Activated T-helper 2 cell treated with anti-CD3 and anti-CD28 coated beads, Interferon-gamma antibody, Interleukin-2, Interleukin-4, amounts not matched to agents 10 μg/mL and 5 μg/mL and 100 μg/mL, durations not matched to agents 14 hours and 24 hours and 36 hours (primary cell): ENCODE measurements at regions of chr1 and their contacts with region 1.

Region 1: DNA sequence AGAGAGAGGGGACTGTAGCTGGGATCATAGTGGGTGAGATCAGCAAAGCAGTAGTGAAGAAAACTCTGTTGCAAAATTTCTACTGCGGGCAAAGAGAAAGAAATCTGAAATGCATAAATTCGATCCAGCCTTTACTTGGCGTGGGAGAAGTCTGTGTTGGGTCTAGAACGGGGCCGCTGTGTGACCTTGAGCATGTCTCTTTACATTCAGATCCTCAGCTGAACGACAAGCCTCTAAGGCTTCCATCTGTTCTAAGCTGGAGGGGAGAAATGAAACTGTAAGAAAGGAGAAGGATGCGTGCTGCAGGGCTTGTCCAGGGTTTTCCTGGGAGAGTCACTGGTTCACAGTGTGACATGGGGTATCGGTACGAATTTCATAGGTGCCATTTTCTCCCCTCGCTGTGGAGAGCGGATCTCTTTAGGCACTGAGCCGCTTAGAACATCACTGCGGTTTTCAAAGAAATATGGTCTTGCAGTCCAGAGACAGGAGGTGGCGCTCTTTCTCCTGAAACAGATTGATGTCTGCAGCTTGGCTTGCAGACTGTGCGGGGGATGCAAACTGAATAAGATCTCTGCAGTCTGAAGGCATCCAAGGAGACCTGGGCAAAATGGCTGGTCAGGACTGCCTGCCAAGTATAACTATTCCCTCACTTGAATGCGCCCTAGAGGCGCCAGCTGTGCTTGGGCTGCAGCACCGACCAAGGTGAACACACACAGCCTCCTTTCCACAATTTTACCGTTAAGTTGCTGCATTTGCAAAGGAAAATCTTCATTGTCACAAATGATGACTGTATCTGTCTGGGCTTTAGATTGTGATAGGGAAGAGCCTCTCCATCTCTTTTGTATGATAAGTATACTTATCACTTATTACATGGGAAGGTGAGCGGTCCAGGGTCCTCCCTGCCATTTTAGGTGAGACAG is 104.1 kb downstream of the XCL2 start:
- DNase-seq: peak; percentile 79
- H3K4me3 Mint-ChIP-seq: peak overlapping the region; percentile 58
- H3K27ac Mint-ChIP-seq: peak overlapping the region; percentile 65
- H3K4me1 Mint-ChIP-seq: peaks cover 57% of the 10 kb centered on the region
- H3K27me3 Mint-ChIP-seq: no peaks in the 10 kb centered on the region

Region 2: DNA sequence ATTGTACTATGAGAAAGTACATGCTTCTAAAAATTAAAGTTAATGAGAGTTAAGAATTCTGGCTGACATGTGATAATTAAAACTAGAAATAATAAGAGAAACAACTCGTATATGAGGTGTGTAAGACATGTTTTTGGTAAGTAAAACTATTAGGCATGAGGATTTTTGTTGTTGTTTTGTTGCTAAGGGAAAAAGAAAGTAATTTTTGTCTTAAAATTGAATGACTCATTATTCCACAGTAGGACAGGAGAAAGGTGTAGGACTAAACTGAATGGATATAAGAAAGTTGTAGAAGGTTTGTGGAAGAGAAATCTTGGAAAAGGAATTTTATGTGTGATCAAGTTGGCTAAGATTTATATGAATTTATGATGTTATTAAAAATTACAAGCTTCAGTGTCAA is 104.2 kb before region 1 on chr1:
- intact Hi-C with region 1: no loop called
- DNase-seq: no peak
- H3K4me3 Mint-ChIP-seq: no peak overlapping the region
- H3K27ac Mint-ChIP-seq: no peak overlapping the region
- H3K4me1 Mint-ChIP-seq: peaks cover 32% of the 10 kb centered on the region
- H3K27me3 Mint-ChIP-seq: peaks cover 1% of the 10 kb centered on the region

Region 3: DNA sequence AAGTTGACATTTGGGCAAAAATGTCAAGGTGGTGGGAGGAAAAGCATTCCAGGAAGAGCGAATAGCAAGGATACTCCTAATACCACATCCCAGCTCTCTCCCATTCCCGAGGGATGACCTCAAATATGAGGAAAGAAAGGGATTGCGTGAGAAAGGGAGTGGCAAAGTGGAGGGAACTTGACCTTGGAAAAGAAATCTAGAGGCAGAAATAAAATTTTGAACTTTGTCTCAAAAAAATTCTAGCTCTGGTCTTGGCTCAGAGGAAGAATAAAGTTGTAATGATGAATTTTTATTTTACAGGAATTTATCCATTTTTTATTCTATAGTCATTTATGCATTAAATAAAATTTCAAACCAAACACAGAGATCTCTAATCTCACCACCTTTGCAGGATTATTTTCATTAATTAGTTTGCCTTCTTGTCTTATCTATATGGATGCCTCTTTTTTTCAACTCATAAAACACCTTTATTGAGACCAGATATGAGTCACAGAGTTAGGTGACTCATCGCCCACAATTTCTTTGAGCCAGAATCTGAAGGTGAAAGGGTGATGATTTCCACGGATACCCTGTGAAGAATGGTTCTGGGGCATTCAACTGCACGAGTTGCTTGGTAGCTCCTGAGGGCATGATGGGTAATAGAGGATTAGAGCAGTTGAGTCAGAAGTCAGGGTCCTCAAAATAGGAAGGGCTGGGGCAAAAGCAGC is 31.0 kb before region 1 on chr1:
- intact Hi-C with region 1: loop called (anchors 2 kb)
- DNase-seq: peak; percentile 64
- H3K4me3 Mint-ChIP-seq: peak overlapping the region; percentile 40
- H3K27ac Mint-ChIP-seq: peak overlapping the region; percentile 90
- H3K4me1 Mint-ChIP-seq: peaks cover 48% of the 10 kb centered on the region
- H3K27me3 Mint-ChIP-seq: no peaks in the 10 kb centered on the region

Region 4: DNA sequence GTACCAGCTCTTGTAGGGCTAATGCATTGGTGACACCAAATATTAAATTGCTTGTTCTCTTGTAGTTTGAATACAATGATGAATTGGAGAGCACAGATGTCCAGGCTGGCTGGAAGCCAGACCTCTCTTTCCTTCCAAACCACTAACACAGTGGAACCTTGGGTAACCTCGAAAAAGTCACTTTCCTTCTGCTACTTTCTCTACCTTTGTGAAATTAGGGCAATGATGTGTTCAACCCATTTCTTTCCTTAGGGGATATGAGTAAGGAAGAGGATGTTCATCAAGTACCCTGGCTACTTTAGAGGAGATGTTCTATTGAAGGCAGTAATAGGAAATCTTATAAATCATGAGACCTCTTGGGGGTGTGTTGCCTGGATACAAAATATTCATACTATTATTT is 48.4 kb after region 1 on chr1:
- intact Hi-C with region 1: loop called (anchors 5 kb)
- DNase-seq: no peak
- H3K4me3 Mint-ChIP-seq: no peak overlapping the region
- H3K27ac Mint-ChIP-seq: no peak overlapping the region
- H3K4me1 Mint-ChIP-seq: peaks cover 26% of the 10 kb centered on the region
- H3K27me3 Mint-ChIP-seq: no peaks in the 10 kb centered on the region

Region 5: GRCh38 chr1:168572633-168573032 is 132.9 kb after region 1 on chr1:
- intact Hi-C with region 1: loop called (anchors 1 kb)
- DNase-seq: no peak
- H3K4me3 Mint-ChIP-seq: no peak overlapping the region
- H3K27ac Mint-ChIP-seq: peak overlapping the region; percentile 2
- H3K4me1 Mint-ChIP-seq: peaks cover 33% of the 10 kb centered on the region
- H3K27me3 Mint-ChIP-seq: peaks cover 9% of the 10 kb centered on the region

Region 6: DNA sequence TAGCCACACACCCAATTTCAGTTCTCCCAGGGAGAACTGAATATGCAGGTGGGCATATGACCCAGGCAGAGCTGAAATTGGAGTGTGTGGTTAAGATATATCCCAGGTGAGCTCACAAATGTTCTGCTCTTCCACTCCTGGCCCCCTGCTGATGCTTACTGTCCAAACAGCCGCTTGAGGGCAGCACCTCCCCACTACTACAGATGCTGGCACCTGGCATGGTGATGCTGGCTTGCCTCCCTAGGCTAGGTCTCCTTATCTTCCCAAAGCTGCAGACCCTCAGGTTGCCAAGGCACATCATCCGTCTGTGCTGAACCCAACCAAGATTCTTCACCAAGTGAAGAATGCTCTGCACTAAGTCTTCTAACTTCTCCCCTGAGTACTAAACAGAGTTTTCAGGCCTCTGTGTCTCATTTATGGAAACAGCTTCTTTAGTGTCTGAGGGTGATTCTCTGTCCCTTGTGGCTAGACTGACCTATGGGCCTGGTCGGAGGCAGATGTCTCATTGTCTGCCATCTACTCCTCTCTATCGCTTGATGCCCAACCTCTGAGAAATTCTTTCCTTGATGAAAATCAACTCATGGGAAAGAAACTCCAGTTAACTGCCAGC is 163.9 kb after region 1 on chr1:
- intact Hi-C with region 1: loop called (anchors 5 kb)
- DNase-seq: peak; percentile 51
- H3K4me3 Mint-ChIP-seq: no peak overlapping the region
- H3K27ac Mint-ChIP-seq: no peak overlapping the region
- H3K4me1 Mint-ChIP-seq: peaks cover 5% of the 10 kb centered on the region
- H3K27me3 Mint-ChIP-seq: peaks cover 11% of the 10 kb centered on the region